ENCODE measurements at regions of chr4 and their contacts with region 1.

Region 1: DNA sequence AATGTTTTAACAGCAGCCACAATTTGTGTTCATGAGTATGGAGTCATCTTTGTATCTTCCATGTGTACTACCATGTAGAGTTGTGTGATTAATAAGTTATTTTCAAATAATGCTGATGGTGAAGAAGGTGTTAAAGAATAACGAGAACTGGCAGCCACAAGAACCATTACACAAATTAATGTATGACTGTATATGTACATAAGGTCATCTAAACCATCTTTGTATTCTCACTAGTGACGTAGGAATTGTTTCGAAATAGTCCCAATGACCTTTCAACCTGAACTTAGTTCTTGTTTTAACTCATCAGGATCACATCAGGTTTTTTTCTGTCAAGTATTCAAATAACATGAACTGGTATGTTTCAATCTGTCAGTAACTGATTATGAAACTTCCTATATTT is 48.3 kb upstream of the NOCT start:
- DNase-seq: no peak
- H3K4me3 ChIP-seq: no peak overlapping the region
- H3K27ac ChIP-seq: no peak overlapping the region
- H3K4me1 ChIP-seq: no peaks in the 10 kb centered on the region
- H3K27me3 ChIP-seq: no peaks in the 10 kb centered on the region
- CTCF ChIP-seq: no peak
- POLR2A ChIP-seq: no peak

Region 2: GRCh38 chr4:138535316-138535715 is 432.0 kb before region 1 on chr4:
- intact Hi-C with region 1: no loop called
- DNase-seq: no peak
- H3K4me3 ChIP-seq: no peak overlapping the region
- H3K27ac ChIP-seq: no peak overlapping the region
- H3K4me1 ChIP-seq: no peaks in the 10 kb centered on the region
- H3K27me3 ChIP-seq: no peaks in the 10 kb centered on the region
- CTCF ChIP-seq: no peak
- POLR2A ChIP-seq: no peak

Region 3: DNA sequence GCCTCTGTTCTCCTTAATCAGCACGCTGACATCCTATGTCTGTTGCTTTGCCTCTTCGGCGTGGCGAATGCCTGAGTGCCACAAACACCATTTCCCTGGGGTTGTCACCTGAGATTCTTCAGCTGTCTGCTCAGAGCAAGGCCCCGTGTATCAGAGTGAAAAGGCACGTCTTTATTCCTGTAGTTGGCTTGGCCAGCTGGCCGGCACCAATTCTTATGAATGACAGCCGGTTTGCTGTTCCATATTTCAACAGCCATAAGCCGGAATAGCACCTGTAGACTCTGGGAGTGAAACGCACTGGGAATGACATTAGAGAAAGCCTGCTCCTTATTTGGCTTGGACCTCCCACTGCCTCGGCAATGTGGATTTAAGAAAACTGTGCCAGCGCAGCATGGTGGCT is 787.6 kb after region 1 on chr4:
- intact Hi-C with region 1: loop called (anchors 5 kb)
- DNase-seq: no peak
- H3K4me3 ChIP-seq: no peak overlapping the region
- H3K27ac ChIP-seq: no peak overlapping the region
- H3K4me1 ChIP-seq: no peaks in the 10 kb centered on the region
- H3K27me3 ChIP-seq: no peaks in the 10 kb centered on the region
- CTCF ChIP-seq: no peak
- POLR2A ChIP-seq: no peak